Tibial artery (tissue), 4 donors: ENCODE measurements at regions of chr17 and their contacts with region 1.

Region 1: GRCh38 chr17:77429919-77430752 is 289.4 kb downstream of the SEC14L1 start:
- DNase-seq: peak; percentile 96 to 98
- H3K4me3 ChIP-seq: no peak overlapping the region
- H3K27ac ChIP-seq: peak overlapping the region; percentile 65 to 72
- H3K4me1 ChIP-seq: peaks cover 7 to 90% (median 79%) of the 10 kb centered on the region in 4 donors
- H3K27me3 ChIP-seq: no peaks in the 10 kb centered on the region
- CTCF ChIP-seq: peak; percentile 78 to 88

Region 2: DNA sequence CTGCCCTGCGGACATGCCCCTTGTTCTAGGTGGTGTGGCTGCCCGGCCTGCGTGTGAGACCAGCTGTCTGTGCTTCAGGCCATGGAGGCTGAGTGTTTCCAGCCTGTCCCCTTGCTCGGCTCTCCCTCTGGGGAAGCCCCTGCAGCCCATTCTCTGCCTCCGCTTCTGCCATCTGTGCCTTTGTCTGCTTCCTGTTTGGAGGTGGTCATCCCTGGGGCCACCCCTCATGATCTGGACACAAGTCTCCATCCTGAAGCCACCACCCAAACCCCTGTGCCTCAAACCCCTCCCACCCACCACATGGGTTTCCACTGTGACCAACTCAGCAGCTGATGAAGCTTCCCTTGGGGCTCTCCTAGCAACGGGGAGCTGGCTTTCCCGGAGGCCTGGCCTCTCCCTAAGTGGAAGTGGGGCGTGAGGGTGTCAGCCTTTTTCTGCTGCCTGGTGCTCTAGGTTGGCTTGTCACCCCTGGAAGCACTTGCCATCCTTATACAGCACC is 104.5 kb before region 1 on chr17:
- intact Hi-C with region 1: loop called (anchors 5 kb)
- DNase-seq: no peak
- H3K4me3 ChIP-seq: no peak overlapping the region
- H3K27ac ChIP-seq: peak overlapping the region; percentile 90 to 92
- H3K4me1 ChIP-seq: peaks cover 24 to 63% (median 48%) of the 10 kb centered on the region in 4 donors
- H3K27me3 ChIP-seq: no peaks in the 10 kb centered on the region
- CTCF ChIP-seq: no peak

Region 3: GRCh38 chr17:77372444-77373298 is 57.5 kb before region 1 on chr17:
- intact Hi-C with region 1: loop called (anchors 5 kb)
- DNase-seq: peak; percentile 83 to 94
- H3K4me3 ChIP-seq: peak overlapping the region; percentile 63 to 93
- H3K27ac ChIP-seq: peak overlapping the region; percentile 88 to 97
- H3K4me1 ChIP-seq: peaks cover 5 to 66% (median 52%) of the 10 kb centered on the region in 4 donors
- H3K27me3 ChIP-seq: no peaks in the 10 kb centered on the region
- CTCF ChIP-seq: no peak

Region 4: DNA sequence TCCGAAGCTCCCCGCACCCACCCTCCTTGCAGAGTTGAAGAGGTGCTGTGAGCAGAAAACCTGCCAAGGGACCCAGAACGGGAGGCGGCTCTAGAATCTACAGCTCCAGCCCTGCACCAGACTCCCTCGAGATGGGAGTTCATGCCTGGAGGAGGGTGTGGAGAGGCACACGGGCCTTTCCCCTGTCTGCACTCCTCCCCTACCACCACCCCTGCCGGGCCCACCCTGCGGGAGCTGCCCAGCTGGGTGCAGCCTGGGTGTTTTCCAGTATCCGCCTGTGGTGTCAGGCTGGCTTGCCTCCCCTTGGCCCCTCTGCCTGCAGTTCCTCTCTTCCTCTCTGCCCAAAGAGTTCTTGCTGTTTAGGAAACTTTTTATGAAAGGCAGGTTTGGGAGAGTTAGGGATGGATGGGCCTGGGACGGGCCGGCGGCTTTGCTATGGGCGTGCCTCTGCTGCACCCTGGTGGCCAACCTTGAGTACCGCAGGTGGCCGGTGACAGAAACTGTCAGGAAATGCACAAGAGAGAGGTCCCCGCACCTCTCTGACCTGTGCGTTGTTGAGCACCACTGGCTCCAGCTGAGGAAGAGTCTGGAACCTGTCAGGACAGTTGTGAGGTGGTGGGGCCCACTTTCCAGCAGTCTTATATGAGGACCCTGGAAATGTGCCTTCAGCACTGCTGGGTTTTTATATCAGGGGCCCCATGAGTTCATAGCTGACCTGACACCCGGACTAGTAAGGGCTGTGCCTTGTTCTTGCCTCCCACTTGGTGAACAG is 64.7 kb after region 1 on chr17:
- intact Hi-C with region 1: loop called (anchors 2 kb)
- DNase-seq: peak; percentile 86 to 87
- H3K4me3 ChIP-seq: no peak overlapping the region
- H3K27ac ChIP-seq: no peak overlapping the region
- H3K4me1 ChIP-seq: peaks cover 5 to 19% (median 15%) of the 10 kb centered on the region in 4 donors
- H3K27me3 ChIP-seq: no peaks in the 10 kb centered on the region
- CTCF ChIP-seq: peak; percentile 97 to 99

Region 5: DNA sequence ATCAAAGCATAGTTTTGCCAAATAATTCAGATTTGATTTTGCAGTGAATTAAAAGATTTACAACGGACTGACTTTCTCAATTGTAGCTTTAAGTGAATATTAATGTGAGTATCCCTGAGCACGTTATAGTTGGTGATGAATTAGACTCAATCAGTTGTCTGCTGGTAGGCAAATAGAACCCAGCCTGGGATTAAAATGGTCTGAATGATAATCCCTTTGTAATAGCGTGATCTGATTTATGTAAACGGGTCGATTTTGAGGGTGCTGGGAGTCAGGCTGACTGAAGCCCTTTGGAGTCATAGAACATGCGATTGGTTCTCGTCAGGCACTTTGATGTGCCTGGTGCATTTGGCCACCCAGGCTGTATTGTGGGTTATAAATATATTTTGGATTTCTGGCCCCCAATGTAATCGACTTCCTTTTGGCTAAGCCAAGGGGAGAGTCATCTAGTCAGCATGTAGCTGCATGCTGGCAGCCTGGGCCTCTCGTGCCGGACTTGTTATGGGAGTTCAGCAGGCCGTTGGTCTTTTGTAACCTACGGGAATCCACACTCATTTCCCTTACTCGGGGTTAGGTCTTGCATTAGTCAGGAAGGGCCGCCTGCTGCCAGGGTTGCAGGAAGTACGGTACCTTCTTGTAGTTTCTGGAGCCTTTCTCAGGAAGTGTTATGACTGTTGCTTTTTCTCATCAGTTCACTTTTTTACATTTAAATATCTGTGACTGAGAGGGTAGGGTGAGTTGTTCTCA is 953.8 kb after region 1 on chr17:
- intact Hi-C with region 1: no loop called
- DNase-seq: peak; percentile 90 to 94
- H3K4me3 ChIP-seq: no peak overlapping the region
- H3K27ac ChIP-seq: peak overlapping the region; percentile 57 to 60
- H3K4me1 ChIP-seq: peaks cover 0 to 74% (median 42%) of the 10 kb centered on the region in 4 donors
- H3K27me3 ChIP-seq: no peaks in the 10 kb centered on the region
- CTCF ChIP-seq: no peak